ENCODE measurements at regions of chr10 and their contacts with region 1.

Region 1: GRCh38 chr10:120336911-120337540 is 120.0 kb upstream of the PLPP4 start:
- DNase-seq: peak; percentile 72
- H3K4me3 Mint-ChIP-seq: no peak overlapping the region
- H3K27ac Mint-ChIP-seq: no peak overlapping the region
- H3K4me1 Mint-ChIP-seq: no peaks in the 10 kb centered on the region
- H3K27me3 Mint-ChIP-seq: peaks cover 13% of the 10 kb centered on the region

Region 2: DNA sequence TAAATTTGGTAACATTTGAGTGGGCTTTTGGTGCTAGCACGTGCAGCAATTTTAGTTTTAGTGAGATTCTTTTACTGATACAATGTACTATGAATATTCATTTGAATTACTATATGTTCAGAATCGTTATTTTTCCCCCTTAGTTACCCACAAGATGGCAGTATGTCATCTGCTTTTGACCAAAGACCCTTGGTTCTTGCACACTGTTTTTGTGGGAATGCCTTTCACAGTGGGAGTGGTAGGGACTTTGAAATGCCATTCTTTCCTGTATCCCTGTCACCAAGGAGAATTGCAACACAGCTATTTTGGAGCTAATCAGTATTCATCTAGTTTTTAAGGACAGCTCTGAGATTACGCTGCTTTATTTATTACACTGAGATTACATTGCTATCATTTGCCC is 403.8 kb before region 1 on chr10:
- CTCF ChIA-PET with region 1: interaction called, 4 read pairs
- POLR2A ChIA-PET with region 1: no interaction called
- intact Hi-C with region 1: loop called (anchors 5 kb)
- DNase-seq: no peak
- H3K4me3 Mint-ChIP-seq: no peak overlapping the region
- H3K27ac Mint-ChIP-seq: no peak overlapping the region
- H3K4me1 Mint-ChIP-seq: peaks cover 4% of the 10 kb centered on the region
- H3K27me3 Mint-ChIP-seq: no peaks in the 10 kb centered on the region

Region 3: GRCh38 chr10:120221873-120222485 is 115.0 kb before region 1 on chr10:
- CTCF ChIA-PET with region 1: interaction called, 15 read pairs
- POLR2A ChIA-PET with region 1: no interaction called
- intact Hi-C with region 1: loop called (anchors 1 kb)
- DNase-seq: no peak
- H3K4me3 Mint-ChIP-seq: no peak overlapping the region
- H3K27ac Mint-ChIP-seq: no peak overlapping the region
- H3K4me1 Mint-ChIP-seq: no peaks in the 10 kb centered on the region
- H3K27me3 Mint-ChIP-seq: no peaks in the 10 kb centered on the region

Region 4: GRCh38 chr10:120347644-120348043 is 10.6 kb after region 1 on chr10:
- CTCF ChIA-PET with region 1: interaction called, 13 read pairs
- POLR2A ChIA-PET with region 1: no interaction called
- intact Hi-C with region 1: no loop called
- DNase-seq: no peak
- H3K4me3 Mint-ChIP-seq: no peak overlapping the region
- H3K27ac Mint-ChIP-seq: no peak overlapping the region
- H3K4me1 Mint-ChIP-seq: no peaks in the 10 kb centered on the region
- H3K27me3 Mint-ChIP-seq: peaks cover 3% of the 10 kb centered on the region

Measured in activated CD4-positive, alpha-beta memory T cell treated with anti-CD3 and anti-CD28 coated beads for 36 hours (primary cell).